ENCODE measurements at regions of chr1 and their contacts with region 1.

Region 1: DNA sequence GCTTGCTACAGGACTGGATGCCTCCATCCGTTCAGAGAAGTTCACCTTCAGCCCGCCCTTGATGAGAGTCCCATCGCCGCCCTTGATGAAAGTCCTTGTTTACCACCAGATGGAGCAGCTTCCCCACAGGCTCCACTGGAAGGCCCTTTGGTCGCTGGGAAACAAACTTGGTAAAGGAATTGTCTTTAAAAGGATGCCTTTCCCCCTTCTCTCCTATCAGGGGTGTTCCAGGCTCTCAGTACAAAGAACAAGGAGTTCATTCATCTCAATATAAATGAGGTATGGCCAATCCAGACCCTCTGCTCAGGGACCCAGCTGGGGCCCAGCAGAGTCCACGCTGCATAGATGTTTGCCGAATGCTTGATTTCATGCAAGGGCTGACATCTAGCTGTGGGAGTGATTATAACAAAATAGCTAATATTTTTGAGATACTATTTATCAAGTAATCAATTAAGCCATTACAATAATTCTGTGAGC is 50.8 kb downstream of the CAPN9 start:
- DNase-seq: peak; percentile 78
- ATAC-seq: peak; percentile 92
- H3K4me3 ChIP-seq: no peak overlapping the region
- H3K27ac ChIP-seq: no peak overlapping the region
- H3K4me1 ChIP-seq: no peaks in the 10 kb centered on the region
- H3K27me3 ChIP-seq: peaks cover 11% of the 10 kb centered on the region
- CTCF ChIP-seq: peak; percentile 96

Region 2: GRCh38 chr1:230917284-230918135 is 119.5 kb after region 1 on chr1:
- CTCF ChIA-PET with region 1: no interaction called
- POLR2A ChIA-PET with region 1: no interaction called
- intact Hi-C with region 1: loop called (anchors 1 kb)
- DNase-seq: peak; percentile 88
- ATAC-seq: peak; percentile 78
- H3K4me3 ChIP-seq: no peak overlapping the region
- H3K27ac ChIP-seq: no peak overlapping the region
- H3K4me1 ChIP-seq: no peaks in the 10 kb centered on the region
- H3K27me3 ChIP-seq: no peaks in the 10 kb centered on the region
- CTCF ChIP-seq: peak; percentile 85

Region 3: DNA sequence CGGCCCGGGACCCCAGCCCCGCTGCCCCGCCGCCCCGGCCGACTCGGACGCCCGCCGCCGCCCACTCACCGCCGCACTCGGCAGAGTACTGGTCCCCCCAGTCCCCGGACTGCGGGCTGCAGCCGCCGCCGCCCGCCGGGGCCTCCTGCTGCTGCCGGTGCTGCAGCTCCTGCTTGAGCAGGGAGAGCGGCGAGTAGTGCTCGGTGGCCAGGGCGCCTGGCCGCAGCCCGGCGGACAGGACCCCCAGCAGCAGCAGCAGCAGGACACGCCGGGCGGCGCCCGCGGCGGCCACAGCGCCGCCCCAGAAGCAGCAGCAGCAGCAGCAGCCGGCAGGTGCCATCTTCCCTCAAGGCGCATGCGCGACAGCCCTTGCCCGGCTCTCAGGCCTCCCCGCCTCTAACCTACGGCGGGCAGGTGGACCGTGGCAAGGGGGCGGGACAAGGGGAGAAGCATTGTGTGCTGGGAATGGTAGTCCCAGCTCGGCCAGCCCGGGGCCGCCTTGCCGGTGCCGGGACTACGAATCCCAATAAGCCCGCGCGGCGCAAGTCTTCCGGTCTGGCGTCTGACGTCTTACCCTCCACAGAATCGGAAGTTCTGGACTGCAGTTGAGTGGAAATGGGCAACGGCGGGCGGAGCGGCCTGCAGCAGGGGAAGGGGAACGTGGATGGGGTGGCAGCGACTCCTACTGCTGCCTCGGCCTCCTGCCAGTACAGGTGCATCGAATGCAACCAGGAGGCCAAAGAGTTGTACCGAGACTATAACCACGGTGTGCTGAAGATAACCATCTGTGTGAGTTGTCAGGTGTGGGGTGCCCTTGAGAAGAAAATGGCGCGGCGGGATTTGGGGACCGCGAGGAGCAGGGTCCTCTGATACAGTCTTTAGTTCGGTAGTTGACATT is 180.8 kb after region 1 on chr1 and contains the starts of genes ARV1 and TTC13:
- CTCF ChIA-PET with region 1: interaction called, 3 read pairs
- POLR2A ChIA-PET with region 1: no interaction called
- intact Hi-C with region 1: loop called (anchors 1 kb)
- DNase-seq: peak; percentile 99
- ATAC-seq: peak; percentile 99
- H3K4me3 ChIP-seq: peak within 1 kb of the TSS; percentile 91
- H3K27ac ChIP-seq: no peak within 1 kb of the TSS
- H3K4me1 ChIP-seq: peaks cover 17% of the 10 kb centered on the region
- H3K27me3 ChIP-seq: no peaks in the 10 kb centered on the region
- CTCF ChIP-seq: peak; percentile 60
- total RNA-seq, gene ARV1: 29.4 and 30.6 TPM in 2 replicates
- total RNA-seq, gene TTC13: 17.0 and 20.2 TPM in 2 replicates

Region 4: DNA sequence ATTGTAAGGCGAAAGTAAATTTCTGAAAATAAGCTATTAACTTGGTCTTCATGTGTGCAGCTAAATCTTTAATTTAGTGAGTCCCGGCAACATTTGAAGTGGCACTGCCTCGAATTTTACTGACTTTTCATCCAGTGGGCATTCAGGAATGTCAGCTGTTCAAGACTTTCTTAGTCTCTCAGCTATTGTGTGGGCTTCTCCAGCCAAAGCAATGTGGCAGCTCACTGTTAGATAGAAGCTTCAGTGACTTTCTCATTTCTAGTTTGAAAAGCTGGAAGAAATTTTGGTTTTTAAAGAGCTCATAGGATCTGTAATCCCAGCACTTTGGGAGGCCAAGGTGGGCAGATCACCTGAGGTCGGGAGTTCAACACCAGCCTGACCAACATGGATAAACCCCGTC is 286.4 kb after region 1 on chr1:
- CTCF ChIA-PET with region 1: no interaction called
- POLR2A ChIA-PET with region 1: no interaction called
- intact Hi-C with region 1: loop called (anchors 10 kb)
- DNase-seq: no peak
- ATAC-seq: no peak
- H3K4me3 ChIP-seq: no peak overlapping the region
- H3K27ac ChIP-seq: no peak overlapping the region
- H3K4me1 ChIP-seq: no peaks in the 10 kb centered on the region
- H3K27me3 ChIP-seq: peaks cover 64% of the 10 kb centered on the region
- CTCF ChIP-seq: no peak